ENCODE measurements at regions of chr9 and their contacts with region 1.

Region 1: GRCh38 chr9:81465468-81466011 is 223.8 kb downstream of the TLE1 start:
- DNase-seq: peak; percentile 40 to 45
- ATAC-seq: peak; percentile 92 to 97
- H3K4me3 ChIP-seq: peak overlapping the region; percentile 24 to 37 (median 35)
- H3K27ac ChIP-seq: peak overlapping the region; percentile 74 to 91 (median 86)
- H3K4me1 ChIP-seq: peaks cover 16 to 26% of the 10 kb centered on the region in 2 donors
- H3K27me3 ChIP-seq: no peaks in the 10 kb centered on the region
- CTCF ChIP-seq: peak; percentile 16 to 52 (median 46)
- POLR2A ChIP-seq: peak; percentile 33 to 77

Region 2: GRCh38 chr9:81372628-81373191 is 92.8 kb before region 1 on chr9:
- in situ Hi-C with region 1: no loop called
- intact Hi-C with region 1: loop called (anchors 2 kb)
- DNase-seq: peak; percentile 65 to 68
- ATAC-seq: peak; percentile 83 to 87
- H3K4me3 ChIP-seq: no peak overlapping the region
- H3K27ac ChIP-seq: peak overlapping the region; percentile 65 to 76 (median 69)
- H3K4me1 ChIP-seq: peaks cover 18 to 31% of the 10 kb centered on the region in 2 donors
- H3K27me3 ChIP-seq: no peaks in the 10 kb centered on the region
- CTCF ChIP-seq: no peak
- POLR2A ChIP-seq: no peak

Measured in gastrocnemius medialis (tissue), 4 donors.